Heart right ventricle (tissue), 16 donors: ENCODE measurements at regions of chr2 and their contacts with region 1.

Region 1: GRCh38 chr2:177547122-177547521 is 154.5 kb downstream of the AGPS start:
- DNase-seq: no peak
- ATAC-seq: no peak
- H3K4me3 ChIP-seq: no peak overlapping the region
- H3K27ac ChIP-seq: no peak overlapping the region
- H3K4me1 ChIP-seq: peaks cover 0 to 23% (median 5%) of the 10 kb centered on the region in 9 donors
- H3K27me3 ChIP-seq: no peaks in the 10 kb centered on the region
- CTCF ChIP-seq: no peak

Region 2: DNA sequence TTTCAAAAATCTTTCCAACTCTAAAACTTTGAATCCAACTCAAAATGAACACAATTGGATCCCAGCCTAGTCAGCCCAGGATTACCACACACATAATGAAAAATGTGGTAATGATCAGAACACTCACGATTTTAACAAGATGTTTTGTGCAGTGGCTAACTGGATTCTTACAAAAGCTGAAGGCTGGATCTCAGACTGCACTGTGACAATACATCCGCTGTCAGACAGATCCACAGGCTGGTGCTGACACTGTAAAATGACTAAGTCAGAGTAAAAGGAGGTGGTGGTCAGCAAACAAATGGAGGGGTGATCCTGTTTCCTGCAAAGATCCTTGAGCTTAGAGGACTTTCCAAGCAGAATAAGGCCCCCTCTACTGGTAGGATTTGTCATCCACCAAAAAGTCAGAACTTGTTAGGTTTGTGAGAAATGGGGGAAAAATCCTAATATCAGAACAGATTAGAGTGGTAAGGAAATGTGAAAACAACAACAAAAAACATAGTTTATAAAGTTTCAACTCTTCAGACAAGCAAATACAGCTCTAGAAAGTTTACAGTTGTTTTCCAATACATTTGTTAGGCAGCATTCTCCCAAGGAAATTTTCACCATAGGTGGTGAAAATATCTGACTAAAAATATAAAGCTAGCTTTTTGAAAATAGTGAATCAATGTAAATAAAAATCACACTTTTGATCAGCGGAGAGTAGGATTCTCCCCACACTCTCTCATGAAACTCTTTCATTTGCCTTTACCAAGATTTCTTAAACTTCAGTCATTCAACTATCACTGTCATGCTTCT is 57.3 kb after region 1 on chr2:
- intact Hi-C with region 1: loop called in 3 of 10 experiments (anchors 5 kb)
- DNase-seq: peak in 1 of 2 donors; percentile 25
- ATAC-seq: peak in 7 of 8 donors; percentile 44 to 73 (median 66)
- H3K4me3 ChIP-seq: no peak overlapping the region
- H3K27ac ChIP-seq: peak overlapping the region in 2 of 10 donors; percentile 6 to 36
- H3K4me1 ChIP-seq: peaks cover 0 to 13% (median 3%) of the 10 kb centered on the region in 9 donors
- H3K27me3 ChIP-seq: no peaks in the 10 kb centered on the region
- CTCF ChIP-seq: peak; percentile 37 to 83 (median 67)

Region 3: DNA sequence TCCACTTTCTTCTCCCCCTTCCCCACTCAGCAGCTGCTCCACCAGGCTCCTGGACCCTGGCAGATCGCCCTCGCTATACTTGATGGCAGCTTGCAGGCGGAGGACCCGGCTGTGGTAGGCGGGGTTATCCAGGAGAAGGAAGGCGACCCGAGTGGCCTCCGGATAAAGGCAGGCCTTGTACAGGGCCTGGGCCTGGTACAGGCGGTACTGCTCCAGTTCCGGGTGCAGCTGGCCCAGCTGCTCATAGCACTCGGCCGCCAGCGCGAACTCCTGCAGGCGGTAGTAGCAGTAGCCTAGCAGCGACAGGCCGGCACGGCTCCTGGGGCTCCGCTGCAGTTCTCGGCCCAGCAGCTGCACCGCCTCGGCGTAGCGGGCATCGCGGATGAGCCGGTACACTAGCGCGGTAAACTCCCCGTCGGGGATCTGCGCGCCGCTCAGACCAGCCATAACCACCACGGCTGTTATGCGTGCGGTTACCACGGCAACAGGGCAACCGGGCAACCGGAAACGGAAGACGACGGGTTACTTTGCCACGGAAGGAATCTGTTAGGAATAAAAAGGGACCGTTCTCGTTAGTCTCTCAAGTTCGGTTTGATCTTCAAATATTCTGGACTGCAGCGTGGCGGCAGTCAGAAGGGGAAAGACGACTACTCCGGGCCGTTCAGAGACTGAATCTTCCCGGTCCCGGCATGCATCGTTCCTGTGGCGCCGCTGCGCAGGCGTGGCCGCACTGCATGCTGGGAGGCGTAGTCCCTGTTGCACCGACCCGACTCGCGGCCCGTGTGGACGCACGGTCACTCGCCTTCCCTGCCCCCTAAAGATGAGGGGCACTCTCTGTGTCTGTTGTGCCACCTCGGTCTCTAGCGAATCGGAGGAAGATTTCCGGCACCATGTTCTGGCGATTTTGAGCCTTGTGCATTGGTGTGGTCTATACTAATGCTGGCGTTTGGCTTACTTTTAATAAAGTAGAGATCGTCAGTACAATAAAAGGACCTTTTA is 71.4 kb after region 1 on chr2:
- intact Hi-C with region 1: loop called in 3 of 10 experiments (anchors 5 kb)
- DNase-seq: peak; percentile 90 to 93
- ATAC-seq: peak; percentile 97 to 99 (median 98)
- H3K4me3 ChIP-seq: peak overlapping the region; percentile 25 to 97 (median 75)
- H3K27ac ChIP-seq: peak overlapping the region; percentile 91 to 100 (median 96)
- H3K4me1 ChIP-seq: peaks cover 3 to 33% (median 11%) of the 10 kb centered on the region in 9 donors
- H3K27me3 ChIP-seq: no peaks in the 10 kb centered on the region
- CTCF ChIP-seq: no peak

Region 4: GRCh38 chr2:177692042-177692823 is 145.1 kb after region 1 on chr2:
- intact Hi-C with region 1: no loop called
- DNase-seq: no peak
- ATAC-seq: no peak
- H3K4me3 ChIP-seq: no peak overlapping the region
- H3K27ac ChIP-seq: no peak overlapping the region
- H3K4me1 ChIP-seq: no peaks in the 10 kb centered on the region
- H3K27me3 ChIP-seq: no peaks in the 10 kb centered on the region
- CTCF ChIP-seq: no peak